ENCODE measurements at regions of chr11 and their contacts with region 1.

Region 1: GRCh38 chr11:43920598-43921419 is 21.6 kb upstream of the C11orf96 start:
- DNase-seq: peak; percentile 63
- ATAC-seq: peak; percentile 95
- H3K4me3 Mint-ChIP-seq: no peak overlapping the region
- H3K27ac Mint-ChIP-seq: peak overlapping the region; percentile 44
- H3K4me1 Mint-ChIP-seq: peaks cover 14% of the 10 kb centered on the region
- H3K27me3 Mint-ChIP-seq: no peaks in the 10 kb centered on the region

Region 2: DNA sequence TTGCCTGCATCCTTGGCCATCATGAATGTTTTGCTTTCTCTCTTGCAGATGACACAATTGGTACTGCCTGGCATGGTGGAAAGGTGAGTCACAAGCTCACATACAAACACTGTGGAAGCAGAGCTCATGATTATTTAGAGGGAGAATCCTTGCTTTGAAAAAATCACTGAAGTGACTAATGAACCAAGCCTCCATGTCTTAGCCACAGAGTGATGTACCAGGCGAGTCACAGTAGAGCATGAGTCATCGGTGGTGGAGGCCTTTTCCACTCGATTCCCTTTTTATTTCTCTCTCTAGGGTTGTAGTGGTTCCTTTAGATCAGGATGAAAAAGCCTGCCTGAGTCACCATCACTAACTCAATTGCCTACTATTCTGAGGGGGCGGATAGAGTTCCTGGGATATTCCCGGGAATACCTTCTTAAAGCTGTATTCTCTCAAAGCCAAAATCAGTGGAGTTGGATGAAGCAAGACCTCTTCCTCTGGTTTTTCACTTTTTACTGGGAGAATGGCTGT is 89.8 kb before region 1 on chr11:
- CTCF ChIA-PET with region 1: interaction called, 6 read pairs
- POLR2A ChIA-PET with region 1: no interaction called
- intact Hi-C with region 1: loop called in 1 of 2 experiments (anchors 1 kb)
- DNase-seq: peak; percentile 81
- ATAC-seq: peak; percentile 99
- H3K4me3 Mint-ChIP-seq: no peak overlapping the region
- H3K27ac Mint-ChIP-seq: peak overlapping the region; percentile 73
- H3K4me1 Mint-ChIP-seq: peaks cover 24% of the 10 kb centered on the region
- H3K27me3 Mint-ChIP-seq: no peaks in the 10 kb centered on the region

Region 3: GRCh38 chr11:43868852-43869567 is 51.8 kb before region 1 on chr11:
- CTCF ChIA-PET with region 1: no interaction called
- POLR2A ChIA-PET with region 1: no interaction called
- intact Hi-C with region 1: loop called (anchors 1 to 2 kb)
- DNase-seq: peak; percentile 58
- ATAC-seq: peak; percentile 97
- H3K4me3 Mint-ChIP-seq: peak overlapping the region; percentile 7
- H3K27ac Mint-ChIP-seq: peak overlapping the region; percentile 8
- H3K4me1 Mint-ChIP-seq: peaks cover 21% of the 10 kb centered on the region
- H3K27me3 Mint-ChIP-seq: peaks cover 45% of the 10 kb centered on the region

Measured in activated CD4-positive, alpha-beta T cell treated with anti-CD3 and anti-CD28 coated beads for 36 hours (primary cell).